Activated CD4-positive, alpha-beta T cell treated with anti-CD3 and anti-CD28 coated beads for 36 hours (primary cell): ENCODE measurements at regions of chr11 and their contacts with region 1.

Region 1: GRCh38 chr11:73876424-73877300 is at the starts of genes COA4 and PAAF1:
- DNase-seq: peak; percentile 97
- ATAC-seq: peak; percentile 95
- H3K4me3 Mint-ChIP-seq: peak within 1 kb of the TSS; percentile 93
- H3K27ac Mint-ChIP-seq: peak within 1 kb of the TSS; percentile 100
- H3K4me1 Mint-ChIP-seq: peaks cover 32% of the 10 kb centered on the region
- H3K27me3 Mint-ChIP-seq: no peaks in the 10 kb centered on the region
- total RNA-seq, gene COA4: 103 to 112 TPM
- total RNA-seq, gene PAAF1: 34.2 to 34.8 TPM

Region 2: GRCh38 chr11:73779084-73779902 is 97.4 kb before region 1 on chr11:
- CTCF ChIA-PET with region 1: no interaction called
- POLR2A ChIA-PET with region 1: interaction called, 4 read pairs
- intact Hi-C with region 1: loop called (anchors 1 kb)
- DNase-seq: peak; percentile 100
- ATAC-seq: peak; percentile 97
- H3K4me3 Mint-ChIP-seq: peak overlapping the region; percentile 80
- H3K27ac Mint-ChIP-seq: peak overlapping the region; percentile 98
- H3K4me1 Mint-ChIP-seq: peaks cover 10% of the 10 kb centered on the region
- H3K27me3 Mint-ChIP-seq: no peaks in the 10 kb centered on the region

Region 3: GRCh38 chr11:73787643-73788537 is 88.8 kb before region 1 on chr11 and contains the start of gene MRPL48:
- CTCF ChIA-PET with region 1: no interaction called
- POLR2A ChIA-PET with region 1: interaction called, 6 read pairs
- intact Hi-C with region 1: loop called (anchors 1 to 2 kb)
- DNase-seq: peak; percentile 95
- ATAC-seq: peak; percentile 99
- H3K4me3 Mint-ChIP-seq: peak within 1 kb of the TSS; percentile 92
- H3K27ac Mint-ChIP-seq: peak within 1 kb of the TSS; percentile 99
- H3K4me1 Mint-ChIP-seq: peaks cover 9% of the 10 kb centered on the region
- H3K27me3 Mint-ChIP-seq: no peaks in the 10 kb centered on the region
- total RNA-seq, gene MRPL48: 48.5 to 52.0 TPM

Region 4: DNA sequence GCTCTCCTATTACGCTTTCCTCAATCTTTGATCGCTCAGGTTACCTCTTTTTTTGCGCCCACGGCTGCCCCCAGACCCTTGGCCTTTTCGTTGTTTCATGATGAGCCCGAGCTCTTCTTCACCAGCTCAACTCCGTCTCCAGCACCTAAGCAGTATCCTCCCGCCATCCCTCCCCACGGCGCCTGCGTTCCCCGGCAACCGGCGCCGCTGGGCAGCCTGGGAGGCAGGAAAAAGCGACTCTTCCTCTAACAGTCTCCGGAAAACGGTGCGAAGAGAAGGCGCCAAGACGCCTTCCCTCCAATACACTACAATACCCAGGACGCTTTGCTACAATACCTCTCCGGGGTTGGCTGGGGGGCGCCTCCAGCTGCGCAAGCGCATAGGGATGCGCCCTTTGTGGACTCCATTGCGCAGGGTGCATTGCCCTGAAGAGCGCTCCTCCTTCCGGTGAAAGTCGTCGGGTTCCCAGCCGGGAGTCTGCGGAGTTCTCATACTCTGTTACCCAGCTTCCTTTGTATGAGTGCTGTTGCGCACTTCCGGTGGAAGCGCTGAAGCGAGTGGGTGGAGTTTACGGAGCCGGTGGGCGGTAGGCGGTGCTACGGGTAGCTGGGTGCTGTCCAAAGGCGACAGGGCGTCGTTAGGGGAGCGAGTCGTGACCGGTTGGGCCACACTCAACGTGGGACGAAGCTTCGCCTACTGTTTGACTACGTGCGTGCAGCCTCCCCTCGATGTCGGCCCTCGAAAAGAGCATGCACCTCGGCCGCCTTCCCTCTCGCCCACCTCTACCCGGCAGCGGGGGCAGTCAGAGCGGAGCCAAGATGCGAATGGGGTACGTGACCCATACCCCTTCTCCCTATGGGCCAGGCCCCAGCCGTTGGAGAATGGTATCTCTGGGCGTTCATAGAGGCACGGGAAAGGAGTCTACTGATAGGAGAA is 294.3 kb after region 1 on chr11 and contains the starts of genes C2CD3 and PPME1:
- CTCF ChIA-PET with region 1: no interaction called
- POLR2A ChIA-PET with region 1: no interaction called
- intact Hi-C with region 1: loop called (anchors 1 kb)
- DNase-seq: peak; percentile 98
- ATAC-seq: peak; percentile 96
- H3K4me3 Mint-ChIP-seq: no peak within 1 kb of the TSS
- H3K27ac Mint-ChIP-seq: no peak within 1 kb of the TSS
- H3K4me1 Mint-ChIP-seq: peaks cover 16% of the 10 kb centered on the region
- H3K27me3 Mint-ChIP-seq: no peaks in the 10 kb centered on the region
- total RNA-seq, gene C2CD3: 23.9 to 28.0 TPM
- total RNA-seq, gene PPME1: 54.2 to 61.5 TPM

Region 5: DNA sequence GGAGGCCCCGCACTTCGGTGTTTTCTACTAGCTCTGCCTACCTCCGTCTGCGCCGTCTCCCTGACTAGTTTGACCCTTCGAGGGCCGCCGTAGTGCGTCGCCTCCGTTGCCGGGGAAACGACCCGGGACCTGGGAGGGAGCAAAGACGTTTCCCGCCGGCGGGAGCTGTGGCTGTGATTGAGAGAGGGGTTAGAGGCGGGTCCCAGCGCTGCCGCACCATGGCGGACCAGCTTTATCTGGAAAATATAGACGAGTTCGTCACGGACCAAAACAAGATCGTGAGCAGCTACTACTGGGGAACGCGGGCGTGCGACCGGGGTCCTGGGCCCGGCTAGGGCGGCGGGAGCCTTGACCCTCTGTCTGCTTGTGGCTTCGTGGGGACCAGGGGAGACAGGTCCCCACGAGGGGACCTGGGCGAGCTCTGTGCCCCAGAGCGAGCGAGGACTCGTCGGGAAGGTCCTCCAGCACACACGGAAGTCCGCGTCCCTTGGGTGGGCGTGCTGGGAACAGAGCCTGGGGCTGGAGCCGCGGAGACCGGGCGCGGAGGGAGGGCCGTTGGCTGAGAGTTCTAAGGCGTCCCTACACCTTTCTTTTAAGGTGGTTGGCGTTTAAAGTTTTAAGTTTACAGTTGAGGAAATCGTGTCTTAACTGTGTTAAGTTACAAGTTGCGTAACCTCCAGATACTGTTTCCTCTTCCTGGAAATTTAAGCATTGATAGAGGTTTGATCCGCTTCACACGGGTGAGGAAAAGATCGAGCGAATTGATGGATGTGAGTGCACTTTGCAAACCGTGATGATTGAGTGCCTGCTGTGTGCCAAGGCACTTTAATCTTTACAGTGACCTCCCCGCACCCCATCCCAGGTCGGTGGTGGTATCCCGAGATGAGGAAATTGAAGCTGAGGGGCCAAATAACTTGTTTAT is 716.0 kb after region 1 on chr11 and contains the start of gene POLD3:
- CTCF ChIA-PET with region 1: no interaction called
- POLR2A ChIA-PET with region 1: no interaction called
- intact Hi-C with region 1: loop called in 1 of 2 experiments (anchors 2 kb)
- DNase-seq: peak; percentile 98
- ATAC-seq: peak; percentile 96
- H3K4me3 Mint-ChIP-seq: peak within 1 kb of the TSS; percentile 93
- H3K27ac Mint-ChIP-seq: peak within 1 kb of the TSS; percentile 96
- H3K4me1 Mint-ChIP-seq: peaks cover 27% of the 10 kb centered on the region
- H3K27me3 Mint-ChIP-seq: no peaks in the 10 kb centered on the region
- total RNA-seq, gene POLD3: 70.0 to 79.8 TPM